ENCODE measurements at regions of chr11 and their contacts with region 1.

Region 1: GRCh38 chr11:1694064-1694845 is 2.7 kb upstream of the KRTAP5-6 start:
- DNase-seq: peak; percentile 89 to 94
- ATAC-seq: peak; percentile 95 to 99 (median 97)
- H3K4me3 ChIP-seq: peak overlapping the region in 9 of 10 donors; percentile 26 to 64 (median 48)
- H3K27ac ChIP-seq: peak overlapping the region; percentile 3 to 80 (median 71)
- H3K4me1 ChIP-seq: peaks cover 5 to 15% (median 9%) of the 10 kb centered on the region in 9 donors
- H3K27me3 ChIP-seq: peaks cover 0 to 22% (median 0%) of the 10 kb centered on the region in 7 donors
- CTCF ChIP-seq: peak; percentile 93 to 99 (median 95)

Region 2: GRCh38 chr11:1652771-1653540 is 41.3 kb before region 1 on chr11:
- intact Hi-C with region 1: loop called in 7 of 10 experiments (anchors 5 kb)
- DNase-seq: peak; percentile 66 to 79
- ATAC-seq: peak; percentile 80 to 92 (median 85)
- H3K4me3 ChIP-seq: no peak overlapping the region
- H3K27ac ChIP-seq: no peak overlapping the region
- H3K4me1 ChIP-seq: peaks cover 0 to 6% (median 4%) of the 10 kb centered on the region in 9 donors
- H3K27me3 ChIP-seq: peaks cover 0 to 31% (median 11%) of the 10 kb centered on the region in 7 donors
- CTCF ChIP-seq: peak; percentile 94 to 99 (median 98)

Region 3: DNA sequence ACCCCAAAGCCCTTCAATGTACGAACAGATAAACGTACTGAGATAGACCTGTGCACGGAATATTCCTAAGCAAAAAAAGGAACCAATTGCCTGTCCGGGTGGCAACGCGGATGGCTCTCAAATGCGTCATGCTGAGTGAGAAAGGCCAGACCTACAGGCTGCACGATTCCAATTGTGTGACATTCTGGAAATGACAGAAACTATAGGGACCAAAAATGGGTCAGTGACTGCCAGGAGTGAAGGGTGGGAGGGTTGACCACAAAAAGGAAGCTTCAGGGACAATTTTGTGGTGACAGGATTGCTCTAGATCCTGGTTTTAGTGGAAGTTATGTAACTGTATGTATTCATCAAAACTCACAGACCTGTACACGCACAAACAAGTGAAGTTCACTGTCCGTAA is 116.5 kb after region 1 on chr11:
- intact Hi-C with region 1: loop called in 1 of 10 experiments (anchors 5 kb)
- DNase-seq: no peak
- ATAC-seq: peak in 5 of 8 donors; percentile 17 to 75 (median 64)
- H3K4me3 ChIP-seq: no peak overlapping the region
- H3K27ac ChIP-seq: no peak overlapping the region
- H3K4me1 ChIP-seq: peaks cover 0 to 11% (median 0%) of the 10 kb centered on the region in 9 donors
- H3K27me3 ChIP-seq: peaks cover 0 to 81% (median 10%) of the 10 kb centered on the region in 7 donors
- CTCF ChIP-seq: no peak

Region 4: GRCh38 chr11:2256923-2257716 is 562.9 kb after region 1 on chr11:
- intact Hi-C with region 1: no loop called
- DNase-seq: no peak
- ATAC-seq: no peak
- H3K4me3 ChIP-seq: no peak overlapping the region
- H3K27ac ChIP-seq: no peak overlapping the region
- H3K4me1 ChIP-seq: no peaks in the 10 kb centered on the region
- H3K27me3 ChIP-seq: peaks cover 0 to 30% (median 22%) of the 10 kb centered on the region in 7 donors
- CTCF ChIP-seq: no peak